ENCODE measurements at regions of chr11 and their contacts with region 1.

Region 1: DNA sequence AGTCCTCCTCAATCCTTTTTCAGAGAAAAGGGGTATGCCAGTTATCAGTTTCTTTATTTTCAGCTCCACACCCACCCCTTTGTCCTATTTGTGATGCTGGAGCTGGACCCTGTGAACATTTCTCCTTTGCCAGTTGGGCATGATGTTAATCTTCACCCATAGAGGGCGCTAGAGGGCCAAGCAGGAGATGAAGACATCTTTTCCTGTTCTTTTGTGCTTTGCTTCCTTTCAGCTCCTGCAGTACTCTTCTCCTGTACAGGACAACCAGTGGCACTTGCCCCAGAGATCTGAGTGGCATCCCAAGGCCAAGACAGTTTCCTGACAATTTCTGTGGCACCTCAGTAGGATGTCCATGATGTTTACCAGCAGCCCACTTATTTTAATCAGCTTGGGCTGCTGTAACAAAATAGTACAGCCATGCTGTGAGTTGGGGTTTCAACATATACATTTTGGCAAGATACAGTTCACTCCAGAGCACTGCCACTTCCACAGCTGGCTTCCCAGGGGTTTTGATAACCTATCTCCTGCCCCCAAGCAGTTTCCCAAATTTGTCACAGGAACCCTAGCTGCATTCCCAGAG is 4.6 kb downstream of the SAA2 start:
- H3K4me3 Mint-ChIP-seq: no peak overlapping the region
- H3K27ac Mint-ChIP-seq: no peak overlapping the region
- H3K4me1 Mint-ChIP-seq: peaks cover 14% of the 10 kb centered on the region
- H3K27me3 Mint-ChIP-seq: peaks cover 18% of the 10 kb centered on the region

Region 2: DNA sequence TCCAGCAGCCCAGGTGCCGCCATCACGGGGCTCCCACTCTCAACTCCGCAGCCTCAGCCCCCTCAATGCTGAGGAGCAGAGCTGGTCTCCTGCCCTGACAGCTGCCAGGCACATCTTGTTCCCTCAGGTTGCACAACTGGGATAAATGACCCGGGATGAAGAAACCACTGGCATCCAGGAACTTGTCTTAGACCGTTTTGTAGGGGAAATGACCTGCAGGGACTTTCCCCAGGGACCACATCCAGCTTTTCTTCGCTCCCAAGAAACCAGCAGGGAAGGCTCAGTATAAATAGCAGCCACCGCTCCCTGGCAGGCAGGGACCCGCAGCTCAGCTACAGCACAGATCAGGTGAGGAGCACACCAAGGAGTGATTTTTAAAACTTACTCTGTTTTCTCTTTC is 22.1 kb after region 1 on chr11 and contains the start of gene SAA1:
- intact Hi-C with region 1: no loop called
- H3K4me3 Mint-ChIP-seq: no peak within 1 kb of the TSS
- H3K27ac Mint-ChIP-seq: peak within 1 kb of the TSS; percentile 23
- H3K4me1 Mint-ChIP-seq: peaks cover 26% of the 10 kb centered on the region
- H3K27me3 Mint-ChIP-seq: no peaks in the 10 kb centered on the region

Region 3: DNA sequence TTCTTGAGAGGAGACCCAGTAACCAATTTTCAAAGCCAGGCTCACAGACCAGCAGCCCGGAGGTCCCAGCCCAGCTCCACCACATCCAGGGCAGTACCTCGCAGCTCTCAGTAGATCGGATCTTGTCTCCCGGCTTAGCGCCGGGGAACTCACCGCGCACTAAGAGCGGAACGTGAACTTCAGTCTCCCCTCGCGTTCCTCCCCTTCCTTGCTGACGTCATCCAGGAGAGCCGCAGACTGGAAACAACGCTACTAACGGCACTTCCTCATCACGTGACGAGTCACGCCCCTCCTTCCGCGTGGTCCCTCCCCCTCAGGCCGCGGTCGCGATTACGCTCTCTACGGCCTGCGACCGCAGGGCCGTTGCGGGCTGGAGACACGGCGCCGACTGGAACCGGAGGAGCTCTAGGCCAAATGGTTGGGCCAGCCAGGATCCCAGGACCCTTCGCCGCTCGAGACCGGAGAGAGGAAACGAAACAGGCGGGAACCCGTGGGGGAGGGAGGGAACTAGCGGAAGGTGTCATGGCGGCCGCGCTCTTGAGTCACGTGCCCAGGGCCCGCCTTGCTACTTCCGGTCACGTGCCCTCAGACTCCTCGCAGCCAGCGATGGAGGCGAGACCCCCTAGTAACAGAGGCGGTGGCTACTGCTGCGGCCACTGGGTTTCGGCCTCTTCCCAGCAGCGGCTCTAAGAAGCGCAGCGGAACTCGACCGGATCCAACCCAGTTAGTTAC is 78.3 kb after region 1 on chr11 and contains the starts of genes GTF2H1 and HPS5:
- intact Hi-C with region 1: loop called (anchors 5 kb)
- H3K4me3 Mint-ChIP-seq: peak within 1 kb of the TSS; percentile 92
- H3K27ac Mint-ChIP-seq: peak within 1 kb of the TSS; percentile 98
- H3K4me1 Mint-ChIP-seq: peaks cover 71% of the 10 kb centered on the region
- H3K27me3 Mint-ChIP-seq: no peaks in the 10 kb centered on the region

Region 4: GRCh38 chr11:18332302-18332701 is 88.4 kb after region 1 on chr11:
- intact Hi-C with region 1: loop called (anchors 5 kb)
- H3K4me3 Mint-ChIP-seq: no peak overlapping the region
- H3K27ac Mint-ChIP-seq: peak overlapping the region; percentile 57
- H3K4me1 Mint-ChIP-seq: peaks cover 36% of the 10 kb centered on the region
- H3K27me3 Mint-ChIP-seq: no peaks in the 10 kb centered on the region

Measured in dendritic cell treated with granulocyte-macrophage colony-stimulating factor and Interleukin-4, amounts not matched to agents 40 ng/mL and 50 ng/mL, for 4 days (primary cell).